HCT116 (cell line): ENCODE measurements at regions of chr5 and their contacts with region 1.

Region 1: DNA sequence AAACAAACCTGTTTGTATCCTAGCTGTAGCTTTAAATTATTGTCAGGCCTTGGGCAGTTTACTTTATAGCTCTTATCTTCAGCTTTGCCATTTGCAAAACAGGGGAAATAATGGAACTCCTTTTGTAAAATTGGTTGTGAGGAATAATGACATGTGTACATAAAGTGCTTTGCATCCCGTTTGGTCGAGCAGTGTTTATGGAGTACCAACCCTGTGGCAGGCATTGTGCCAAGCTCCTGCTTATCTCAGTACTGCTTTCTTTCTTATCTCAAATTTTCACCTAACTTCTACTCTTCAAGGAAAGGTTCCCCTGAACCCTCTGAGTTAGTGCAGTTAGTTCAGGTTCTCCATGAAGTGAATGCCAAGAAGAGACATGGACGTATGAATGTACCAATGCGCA is 9.4 kb upstream of the TENT2 start:
- DNase-seq: no peak
- ATAC-seq: no peak
- H3K4me3 ChIP-seq: no peak overlapping the region
- H3K27ac ChIP-seq: no peak overlapping the region
- H3K4me1 ChIP-seq: no peaks in the 10 kb centered on the region
- H3K27me3 ChIP-seq: no peaks in the 10 kb centered on the region
- CTCF ChIP-seq: no peak
- POLR2A ChIP-seq: no peak
- RAD21 ChIP-seq: no peak

Region 2: GRCh38 chr5:79636981-79637733 is 34.3 kb after region 1 on chr5:
- CTCF ChIA-PET with region 1: no interaction called
- POLR2A ChIA-PET with region 1: no interaction called
- RAD21 ChIA-PET with region 1: no interaction called
- intact Hi-C with region 1: no loop called
- DNase-seq: no peak
- ATAC-seq: no peak
- H3K4me3 ChIP-seq: no peak overlapping the region
- H3K27ac ChIP-seq: no peak overlapping the region
- H3K4me1 ChIP-seq: no peaks in the 10 kb centered on the region
- H3K27me3 ChIP-seq: no peaks in the 10 kb centered on the region
- CTCF ChIP-seq: no peak
- POLR2A ChIP-seq: no peak
- RAD21 ChIP-seq: no peak

Region 3: GRCh38 chr5:79672392-79672791 is 69.5 kb after region 1 on chr5:
- CTCF ChIA-PET with region 1: no interaction called
- POLR2A ChIA-PET with region 1: no interaction called
- RAD21 ChIA-PET with region 1: no interaction called
- intact Hi-C with region 1: loop called (anchors 2 kb)
- DNase-seq: no peak
- ATAC-seq: no peak
- H3K4me3 ChIP-seq: no peak overlapping the region
- H3K27ac ChIP-seq: no peak overlapping the region
- H3K4me1 ChIP-seq: no peaks in the 10 kb centered on the region
- H3K27me3 ChIP-seq: no peaks in the 10 kb centered on the region
- CTCF ChIP-seq: no peak
- POLR2A ChIP-seq: no peak
- RAD21 ChIP-seq: no peak